HEK293 (cell line): ENCODE measurements at regions of chr12 and their contacts with region 1.

Region 1: DNA sequence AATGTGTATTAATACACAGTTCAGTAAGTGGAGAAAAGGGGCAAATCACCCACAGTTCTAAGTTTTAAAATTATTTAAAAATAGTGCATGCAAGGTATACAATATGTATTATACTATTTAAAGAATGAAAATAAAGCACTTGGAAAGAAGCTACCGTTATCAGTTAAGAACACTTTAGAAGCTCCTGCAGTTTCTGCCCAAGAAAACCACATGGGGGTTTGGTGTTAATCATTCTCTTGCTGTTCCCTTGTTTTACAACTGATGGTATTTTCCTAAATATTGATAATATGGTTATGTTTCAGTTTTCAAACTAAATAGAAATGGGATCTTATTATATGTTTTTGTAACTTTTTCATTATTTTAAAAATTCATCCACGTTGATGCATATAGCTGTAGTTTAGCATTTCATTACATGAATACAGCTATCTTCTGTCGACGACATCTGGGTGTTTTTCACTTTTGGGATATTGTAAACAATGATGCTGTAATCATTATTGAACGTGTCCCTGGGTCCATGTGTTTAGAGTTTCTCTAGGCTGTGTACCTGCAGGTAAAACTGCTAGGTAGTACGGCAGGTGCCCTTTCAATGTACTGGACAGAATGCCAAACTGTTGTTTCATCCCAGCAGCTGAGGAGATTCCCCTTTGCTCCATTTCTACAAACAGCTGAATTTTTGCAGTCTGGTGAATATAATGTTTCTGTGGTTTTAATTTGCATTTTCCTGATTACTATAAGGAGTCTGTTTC is 64.1 kb downstream of the APPL2 start:
- H3K4me3 ChIP-seq: no peak overlapping the region
- H3K27ac ChIP-seq: no peak overlapping the region
- H3K4me1 ChIP-seq: no peaks in the 10 kb centered on the region
- CTCF ChIP-seq: no peak

Region 2: DNA sequence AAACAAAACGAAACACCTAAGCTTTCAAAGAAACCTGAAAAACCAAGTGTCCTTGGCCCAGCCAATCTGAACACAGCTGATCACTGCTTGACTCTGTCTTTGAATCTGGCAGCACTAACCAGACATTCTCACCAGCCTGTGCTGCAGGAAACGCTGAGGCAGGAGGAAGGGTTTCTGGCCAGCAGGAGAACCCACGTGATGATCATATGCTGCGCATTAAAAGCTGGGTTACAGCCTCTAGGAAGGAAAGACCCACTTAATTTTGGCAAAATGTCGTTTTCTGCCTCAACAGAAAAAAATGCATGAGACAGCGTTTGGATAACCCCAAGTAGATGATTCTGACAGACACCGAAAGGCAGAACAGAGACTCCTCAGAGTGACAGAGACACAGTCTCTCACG is 54.4 kb after region 1 on chr12:
- CTCF ChIA-PET with region 1: no interaction called
- POLR2A ChIA-PET with region 1: no interaction called
- H3K4me3 ChIP-seq: no peak overlapping the region
- H3K27ac ChIP-seq: no peak overlapping the region
- H3K4me1 ChIP-seq: no peaks in the 10 kb centered on the region
- CTCF ChIP-seq: no peak

Region 3: GRCh38 chr12:105363890-105364289 is 192.0 kb after region 1 on chr12:
- CTCF ChIA-PET with region 1: no interaction called
- POLR2A ChIA-PET with region 1: interaction called, 11 read pairs
- H3K4me3 ChIP-seq: no peak overlapping the region
- H3K27ac ChIP-seq: no peak overlapping the region
- H3K4me1 ChIP-seq: no peaks in the 10 kb centered on the region
- CTCF ChIP-seq: no peak